ENCODE measurements at regions of chr10 and their contacts with region 1.

Region 1: GRCh38 chr10:84537447-84537931 is 209.1 kb downstream of the CCSER2 start:
- DNase-seq: peak; percentile 40
- ATAC-seq: peak; percentile 65
- H3K4me3 ChIP-seq: no peak overlapping the region
- H3K27ac ChIP-seq: no peak overlapping the region
- H3K4me1 ChIP-seq: peaks cover 0 to 24% of the 10 kb centered on the region in 2 experiments; a peak in 2 of 4 replicates
- H3K27me3 ChIP-seq: no peaks in the 10 kb centered on the region
- CTCF ChIP-seq: peak; percentile 51 to 90 (median 90); a peak in 5 of 6 replicates
- POLR2A ChIP-seq: no peak
- RAD21 ChIP-seq: peak; percentile 97

Region 2: DNA sequence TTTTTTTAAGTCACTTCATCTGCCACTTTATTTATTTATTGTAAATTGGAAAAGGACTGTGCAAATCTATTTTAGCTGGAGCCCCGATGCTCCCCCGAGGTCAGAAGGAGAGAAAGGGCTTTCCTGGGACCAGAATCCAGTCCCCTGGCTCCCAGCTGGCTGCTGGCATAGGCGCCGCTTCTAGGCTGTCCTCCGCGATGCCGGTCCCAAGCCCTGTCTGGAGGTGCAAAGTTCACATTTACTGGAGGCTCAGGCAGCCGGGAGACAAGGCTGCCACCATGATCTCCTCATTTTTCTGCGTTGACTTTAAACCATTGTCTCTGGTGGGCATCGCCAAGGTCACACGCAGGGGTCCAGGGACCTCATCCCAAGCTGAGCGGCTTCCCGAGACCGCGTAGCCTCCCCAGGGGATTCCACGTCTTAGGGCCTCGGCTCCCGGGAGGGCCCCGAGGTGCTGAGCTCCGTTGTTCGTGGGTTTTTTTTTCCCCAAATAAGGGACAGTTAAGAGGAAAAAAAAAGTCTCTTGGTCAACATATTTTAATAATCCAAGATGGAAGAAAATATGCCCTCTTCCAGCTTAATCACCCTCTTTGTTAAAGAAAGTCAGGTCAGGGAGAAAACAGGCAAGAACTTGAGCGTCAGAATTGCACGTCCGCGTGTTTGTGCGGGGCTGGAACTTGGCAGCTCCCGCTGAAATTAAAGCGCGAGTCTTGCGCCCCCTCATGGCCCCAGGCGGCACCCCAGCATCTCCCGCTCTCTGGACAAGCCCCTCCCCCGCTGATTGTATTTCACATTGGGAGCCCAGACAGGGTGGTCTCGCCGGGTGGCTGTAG is 280.8 kb before region 1 on chr10:
- CTCF ChIA-PET with region 1: interaction called, 268 read pairs
- POLR2A ChIA-PET with region 1: no interaction called
- RAD21 ChIA-PET with region 1: no interaction called
- intact Hi-C with region 1: no loop called
- DNase-seq: peak; percentile 46
- ATAC-seq: peak; percentile 91
- H3K4me3 ChIP-seq: no peak overlapping the region
- H3K27ac ChIP-seq: no peak overlapping the region
- H3K4me1 ChIP-seq: peaks cover 0 to 9% of the 10 kb centered on the region in 2 experiments; a peak in 2 of 4 replicates
- H3K27me3 ChIP-seq: no peaks in the 10 kb centered on the region
- CTCF ChIP-seq: peak; percentile 57 to 88 (median 85); a peak in 5 of 6 replicates
- POLR2A ChIP-seq: no peak
- RAD21 ChIP-seq: peak; percentile 55

Region 3: DNA sequence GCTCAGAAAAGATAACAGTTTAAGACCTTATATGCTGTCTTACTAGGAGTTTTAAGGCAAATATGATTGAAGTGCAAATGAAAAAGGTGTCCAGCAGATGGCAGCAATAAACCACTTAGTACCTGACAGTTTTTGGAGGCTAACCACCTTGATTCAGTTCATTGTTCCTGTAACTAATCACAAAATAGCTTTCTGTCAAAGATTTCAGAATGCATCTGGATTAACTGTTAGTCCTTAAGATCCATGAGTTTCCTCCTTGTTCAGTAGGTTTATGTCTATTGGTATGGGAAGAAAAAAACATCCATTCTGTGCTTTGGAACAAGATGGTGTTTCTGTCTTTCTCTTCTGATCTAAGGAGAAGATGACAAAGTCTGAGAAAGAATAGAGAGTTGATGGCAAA is 162.5 kb before region 1 on chr10:
- CTCF ChIA-PET with region 1: interaction called, 29 read pairs
- POLR2A ChIA-PET with region 1: interaction called, 3 read pairs
- RAD21 ChIA-PET with region 1: interaction called in 1 of 2 experiments, 4 read pairs
- intact Hi-C with region 1: loop called (anchors 1 kb)
- DNase-seq: peak; percentile 57
- ATAC-seq: peak; percentile 63
- H3K4me3 ChIP-seq: no peak overlapping the region
- H3K27ac ChIP-seq: no peak overlapping the region
- H3K4me1 ChIP-seq: no peaks in the 10 kb centered on the region
- H3K27me3 ChIP-seq: no peaks in the 10 kb centered on the region
- CTCF ChIP-seq: peak; percentile 60 to 80 (median 73); a peak in 5 of 6 replicates
- POLR2A ChIP-seq: no peak
- RAD21 ChIP-seq: peak; percentile 83

Region 4: GRCh38 chr10:84548869-84549268 is 11.4 kb after region 1 on chr10:
- CTCF ChIA-PET with region 1: interaction called, 27 read pairs
- POLR2A ChIA-PET with region 1: no interaction called
- RAD21 ChIA-PET with region 1: interaction called in 1 of 2 experiments, 4 read pairs
- intact Hi-C with region 1: no loop called
- DNase-seq: no peak
- ATAC-seq: peak; percentile 88
- H3K4me3 ChIP-seq: no peak overlapping the region
- H3K27ac ChIP-seq: no peak overlapping the region
- H3K4me1 ChIP-seq: no peaks in the 10 kb centered on the region
- H3K27me3 ChIP-seq: peaks cover 18% of the 10 kb centered on the region
- CTCF ChIP-seq: peak in 2 of 3 experiments; percentile 55 to 67; a peak in 4 of 6 replicates
- POLR2A ChIP-seq: no peak
- RAD21 ChIP-seq: no peak

Region 5: GRCh38 chr10:84613336-84614021 is 76.0 kb after region 1 on chr10:
- CTCF ChIA-PET with region 1: interaction called, 17 read pairs
- POLR2A ChIA-PET with region 1: no interaction called
- RAD21 ChIA-PET with region 1: interaction called, 5 to 9 read pairs
- intact Hi-C with region 1: no loop called
- DNase-seq: peak; percentile 72
- ATAC-seq: peak; percentile 98
- H3K4me3 ChIP-seq: no peak overlapping the region
- H3K27ac ChIP-seq: no peak overlapping the region
- H3K4me1 ChIP-seq: peaks cover 0 to 4% of the 10 kb centered on the region in 2 experiments; a peak in 1 of 4 replicates
- H3K27me3 ChIP-seq: peaks cover 13% of the 10 kb centered on the region
- CTCF ChIP-seq: peak; percentile 47 to 80 (median 59)
- POLR2A ChIP-seq: no peak
- RAD21 ChIP-seq: peak; percentile 81

Region 6: DNA sequence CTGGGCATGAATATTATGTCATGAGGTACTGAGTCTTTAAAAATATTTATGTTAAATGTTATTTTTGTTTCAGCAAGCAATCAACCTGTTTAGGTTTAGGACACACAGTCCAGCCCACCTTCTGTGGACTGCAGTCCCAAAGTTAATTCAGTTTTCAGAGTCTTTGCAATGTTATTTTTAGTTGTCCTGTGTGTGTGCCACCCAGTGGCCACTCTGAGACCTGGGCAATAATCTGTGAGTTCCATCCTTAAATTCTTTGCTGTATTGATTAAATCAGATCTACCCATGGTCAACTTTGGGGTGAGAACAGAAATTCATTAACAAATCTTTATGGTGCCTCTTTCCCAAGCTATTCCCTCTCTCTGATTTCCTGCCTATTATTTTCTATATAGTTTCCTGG is 206.0 kb after region 1 on chr10:
- CTCF ChIA-PET with region 1: interaction called, 3 read pairs
- POLR2A ChIA-PET with region 1: no interaction called
- RAD21 ChIA-PET with region 1: no interaction called
- intact Hi-C with region 1: loop called (anchors 1 kb)
- DNase-seq: peak; percentile 2
- ATAC-seq: peak; percentile 65
- H3K4me3 ChIP-seq: no peak overlapping the region
- H3K27ac ChIP-seq: no peak overlapping the region
- H3K4me1 ChIP-seq: no peaks in the 10 kb centered on the region
- H3K27me3 ChIP-seq: no peaks in the 10 kb centered on the region
- CTCF ChIP-seq: peak; percentile 28 to 67 (median 64); a peak in 5 of 6 replicates
- POLR2A ChIP-seq: no peak
- RAD21 ChIP-seq: peak; percentile 24; the same call in 1 of the 2 replicates

Measured in HCT116 (cell line).